H1 (cell line): ENCODE measurements at regions of chr14 and their contacts with region 1.

Region 1: DNA sequence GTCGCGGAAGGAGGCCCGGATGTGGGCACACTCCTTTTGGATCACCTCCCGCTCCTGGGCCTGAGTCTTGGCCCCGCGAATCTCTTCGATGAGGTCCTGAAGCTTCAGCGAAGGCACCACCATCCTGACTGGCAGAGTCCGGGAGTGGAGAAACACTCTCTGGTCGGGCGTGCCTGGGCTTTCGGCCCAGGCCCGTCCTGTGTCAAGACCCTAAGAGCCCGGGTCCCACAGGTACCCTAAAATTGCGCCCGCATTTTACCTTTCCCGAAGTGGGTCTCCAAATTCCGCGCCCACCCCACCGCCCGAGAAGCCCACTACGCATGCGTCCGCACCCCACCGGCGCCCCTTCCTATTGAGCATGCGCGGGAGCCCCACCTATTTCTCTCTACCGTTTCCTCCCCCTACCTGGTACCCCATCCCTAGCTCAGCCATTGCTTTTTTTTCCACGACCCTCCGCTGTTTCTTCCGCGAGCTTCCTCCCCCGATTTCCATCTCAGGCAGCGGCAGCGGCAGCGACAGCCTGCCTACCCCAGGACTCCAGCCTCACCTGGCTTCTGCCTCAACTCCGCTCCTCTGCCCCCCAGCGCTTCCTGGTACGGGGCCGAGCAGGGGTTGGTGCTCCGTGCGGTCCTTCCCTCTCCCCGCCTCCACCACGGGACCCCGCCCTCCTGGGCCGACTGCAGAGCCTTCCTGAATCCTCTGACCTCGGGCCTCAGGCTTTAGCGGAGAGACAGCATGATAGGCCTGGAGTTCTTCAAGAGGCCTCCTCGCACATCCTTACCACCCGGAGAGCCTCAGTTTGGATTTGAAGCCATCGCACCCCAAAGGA is at the start of gene AP1G2:
- DNase-seq: peak in 1 of 2 experiments; percentile 91
- H3K4me3 ChIP-seq: peak within 1 kb of the TSS; percentile 52 to 81 (median 67)
- H3K27ac ChIP-seq: peak within 1 kb of the TSS; percentile 51
- H3K4me1 ChIP-seq: peaks cover 8 to 21% (median 11%) of the 10 kb centered on the region in 4 experiments
- H3K27me3 ChIP-seq: no peaks in the 10 kb centered on the region
- CTCF ChIP-seq: no peak
- EP300 ChIP-seq: no peak
- POLR2A ChIP-seq: peak; percentile 38 to 86
- RAD21 ChIP-seq: no peak
- total RNA-seq, gene AP1G2: 70.1 and 70.9 TPM in 2 replicates

Region 2: DNA sequence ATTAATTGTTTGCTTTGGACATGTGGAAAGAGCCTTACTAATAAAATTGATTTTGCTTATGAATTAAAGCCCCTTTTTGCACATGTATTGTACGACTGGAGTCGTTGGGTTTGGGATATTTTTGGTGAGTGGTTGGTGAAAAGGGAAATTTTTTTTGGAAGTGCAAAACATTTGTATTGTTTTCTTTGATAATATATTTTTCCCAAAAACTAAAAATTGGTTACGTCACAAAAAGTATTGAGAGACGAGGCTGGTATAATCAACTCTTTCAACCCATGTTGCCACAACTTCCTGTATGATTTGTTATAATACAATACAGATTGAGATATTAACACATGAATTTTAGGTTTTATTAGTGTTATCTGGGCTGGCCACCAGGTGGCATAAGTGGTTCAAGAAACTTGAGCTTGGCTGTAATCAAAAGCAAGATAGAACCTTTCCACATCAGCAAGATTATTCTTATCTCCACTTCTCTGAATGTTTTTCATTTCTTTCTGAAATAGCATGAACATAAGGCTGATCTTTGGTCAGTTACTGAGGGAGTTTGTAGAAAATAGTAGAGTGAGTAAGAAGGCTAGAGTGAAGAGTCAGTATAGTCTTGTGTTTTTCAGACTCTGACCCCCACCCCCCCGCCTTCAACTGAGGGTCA is 89.2 kb before region 1 on chr14:
- CTCF ChIA-PET with region 1: interaction called, 2,092 read pairs
- POLR2A ChIA-PET with region 1: interaction called, 944 read pairs
- DNase-seq: peak in 1 of 2 experiments; percentile 56
- H3K4me3 ChIP-seq: no peak overlapping the region
- H3K27ac ChIP-seq: no peak overlapping the region
- H3K4me1 ChIP-seq: peaks cover 2 to 15% (median 12%) of the 10 kb centered on the region in 4 experiments; a peak in 5 of 7 replicates
- H3K27me3 ChIP-seq: no peaks in the 10 kb centered on the region
- CTCF ChIP-seq: peak in 2 of 3 experiments; percentile 63 to 70; a peak in 3 of 4 replicates
- EP300 ChIP-seq: no peak
- POLR2A ChIP-seq: no peak
- RAD21 ChIP-seq: peak; percentile 82 to 85

Region 3: DNA sequence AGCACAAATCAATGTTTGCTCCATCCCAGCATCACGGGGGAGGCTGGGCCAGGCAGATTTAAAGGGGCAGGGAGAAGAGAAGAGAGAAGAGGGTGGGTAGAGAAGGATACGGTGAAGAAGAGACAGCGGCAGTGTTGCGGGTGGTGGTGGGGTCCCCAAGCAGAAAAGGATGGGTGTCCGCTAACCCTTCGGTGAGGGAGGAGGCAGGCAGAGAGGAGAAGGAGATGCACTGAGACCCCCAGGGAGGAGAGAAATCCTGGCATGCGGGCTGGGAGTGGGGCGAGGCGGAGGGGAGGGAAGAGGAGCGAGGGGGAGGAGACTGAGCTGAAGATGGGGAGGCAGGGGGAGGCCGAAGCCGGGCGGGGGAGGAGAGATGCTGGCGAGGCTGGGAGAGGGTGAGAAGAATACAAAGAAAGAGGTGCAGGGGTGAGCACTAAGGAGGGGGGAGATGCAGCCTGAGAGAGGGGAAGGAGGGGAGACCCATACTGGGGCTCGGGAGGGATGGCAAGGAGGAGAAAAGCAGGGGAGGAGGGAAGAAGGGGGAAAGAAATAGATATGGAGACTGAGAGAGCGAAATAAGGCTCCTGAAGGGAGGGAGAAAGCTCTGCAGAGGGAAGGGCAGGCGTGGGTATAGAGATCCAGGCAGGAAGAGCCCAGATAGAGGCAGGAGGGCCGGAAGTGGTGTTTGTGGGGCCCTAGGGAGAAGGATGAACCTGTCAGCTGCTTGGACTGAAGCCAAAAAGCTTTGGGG is 11.3 kb after region 1 on chr14 and contains the start of gene JPH4:
- CTCF ChIA-PET with region 1: interaction called, 7 read pairs
- POLR2A ChIA-PET with region 1: interaction called, 14 read pairs
- DNase-seq: peak in 1 of 2 experiments; percentile 77
- H3K4me3 ChIP-seq: peak within 1 kb of the TSS; percentile 23 to 93 (median 54)
- H3K27ac ChIP-seq: no peak within 1 kb of the TSS
- H3K4me1 ChIP-seq: peaks cover 5 to 15% (median 9%) of the 10 kb centered on the region in 4 experiments; a peak in 6 of 7 replicates
- H3K27me3 ChIP-seq: peaks cover 17 to 29% (median 25%) of the 10 kb centered on the region in 4 experiments
- CTCF ChIP-seq: no peak
- EP300 ChIP-seq: peak in 1 of 2 experiments; percentile 17; a peak in 1 of 3 replicates
- POLR2A ChIP-seq: no peak
- RAD21 ChIP-seq: no peak
- total RNA-seq, gene JPH4: 46.4 and 46.7 TPM in 2 replicates

Region 4: GRCh38 chr14:23640524-23641141 is 73.2 kb after region 1 on chr14:
- CTCF ChIA-PET with region 1: no interaction called
- POLR2A ChIA-PET with region 1: no interaction called
- DNase-seq: no peak
- H3K4me3 ChIP-seq: no peak overlapping the region
- H3K27ac ChIP-seq: no peak overlapping the region
- H3K4me1 ChIP-seq: peaks cover 2 to 6% (median 2%) of the 10 kb centered on the region in 4 experiments; a peak in 5 of 7 replicates
- H3K27me3 ChIP-seq: no peaks in the 10 kb centered on the region
- CTCF ChIP-seq: no peak
- EP300 ChIP-seq: no peak
- POLR2A ChIP-seq: no peak
- RAD21 ChIP-seq: no peak